ENCODE measurements at regions of chr16 and their contacts with region 1.

Region 1: GRCh38 chr16:66774981-66775380 is 23.6 kb upstream of the DYNC1LI2 start:
- DNase-seq: no peak
- H3K4me3 ChIP-seq: no peak overlapping the region
- H3K27ac ChIP-seq: no peak overlapping the region
- H3K4me1 ChIP-seq: no peaks in the 10 kb centered on the region
- H3K27me3 ChIP-seq: no peaks in the 10 kb centered on the region
- CTCF ChIP-seq: no peak

Region 2: DNA sequence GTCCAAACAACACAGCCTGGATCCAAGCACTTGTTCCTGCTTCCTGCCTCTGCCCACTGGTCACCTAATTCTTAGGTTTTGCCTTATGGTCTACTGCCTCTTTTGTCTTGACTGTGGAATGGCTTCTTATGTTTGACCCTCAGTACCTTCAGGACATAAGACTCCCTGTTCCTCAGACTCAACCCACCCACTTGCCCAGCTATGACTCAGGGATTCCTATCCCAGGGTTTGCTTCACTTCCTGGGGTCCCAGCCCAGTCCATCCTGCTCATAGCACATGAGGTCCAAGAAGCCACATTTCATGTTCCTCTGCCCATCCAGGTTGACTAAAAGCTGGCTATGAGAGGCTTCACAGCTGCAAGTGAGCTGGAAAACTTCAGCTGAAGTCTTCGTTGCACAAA is 729.4 kb before region 1 on chr16:
- CTCF ChIA-PET with region 1: no interaction called
- POLR2A ChIA-PET with region 1: interaction called, 14 read pairs
- intact Hi-C with region 1: no loop called
- DNase-seq: no peak
- H3K4me3 ChIP-seq: no peak overlapping the region
- H3K27ac ChIP-seq: no peak overlapping the region
- H3K4me1 ChIP-seq: no peaks in the 10 kb centered on the region
- H3K27me3 ChIP-seq: peaks cover 12% of the 10 kb centered on the region; the same call in 1 of the 2 replicates
- CTCF ChIP-seq: no peak

Region 3: GRCh38 chr16:66639091-66639885 is 135.7 kb before region 1 on chr16:
- CTCF ChIA-PET with region 1: interaction called, 11 read pairs
- POLR2A ChIA-PET with region 1: no interaction called
- intact Hi-C with region 1: no loop called
- DNase-seq: peak; percentile 14 to 61
- H3K4me3 ChIP-seq: no peak overlapping the region
- H3K27ac ChIP-seq: 0 out of 2 replicates have a peak overlapping the region, but pooled peaks have one; percentile 4
- H3K4me1 ChIP-seq: no peaks in the 10 kb centered on the region
- H3K27me3 ChIP-seq: no peaks in the 10 kb centered on the region
- CTCF ChIP-seq: no peak